ENCODE measurements at regions of chr10 and their contacts with region 1.

Region 1: DNA sequence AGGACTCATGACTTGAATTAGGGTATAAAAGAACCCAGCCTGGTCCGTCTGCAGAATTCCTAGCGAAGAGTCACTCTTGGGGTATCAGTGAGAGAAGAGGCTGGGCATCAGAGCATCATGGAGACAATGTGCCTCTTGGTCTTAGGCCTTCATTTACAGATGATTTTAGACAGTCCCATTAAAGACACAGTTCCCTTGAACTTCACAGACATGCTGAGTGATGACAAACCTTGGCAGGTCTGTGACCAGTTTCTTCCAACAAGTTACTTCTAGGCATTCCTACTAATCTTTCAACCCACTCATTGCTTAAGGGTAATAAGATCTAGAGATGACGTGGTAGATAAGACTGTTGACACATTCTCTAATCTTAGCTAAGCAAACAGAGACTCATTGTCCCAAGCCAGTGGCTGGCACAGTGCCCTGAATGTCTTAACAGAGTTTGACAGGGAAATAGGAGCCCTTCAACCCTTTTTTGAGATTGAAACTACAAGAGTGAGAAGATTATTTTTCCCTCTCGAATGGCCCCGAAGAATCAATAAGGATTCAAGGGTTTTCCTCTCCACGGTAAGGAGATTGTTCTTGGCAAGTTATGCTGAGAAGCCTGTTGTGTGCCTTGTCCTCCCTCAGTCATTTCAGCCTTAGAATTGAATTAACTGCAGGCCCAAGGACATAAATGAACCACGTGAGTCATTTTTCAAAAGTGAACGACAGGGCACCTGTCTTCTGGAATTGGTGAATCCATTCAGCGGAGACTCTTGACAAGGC is 281.1 kb downstream of the CCDC3 start:
- DNase-seq: peak; percentile 89
- H3K4me3 Mint-ChIP-seq: peak overlapping the region; percentile 39
- H3K27ac Mint-ChIP-seq: peak overlapping the region; percentile 72
- H3K4me1 Mint-ChIP-seq: peaks cover 25% of the 10 kb centered on the region
- H3K27me3 Mint-ChIP-seq: peaks cover 13% of the 10 kb centered on the region
- CTCF ChIP-seq: no peak

Region 2: DNA sequence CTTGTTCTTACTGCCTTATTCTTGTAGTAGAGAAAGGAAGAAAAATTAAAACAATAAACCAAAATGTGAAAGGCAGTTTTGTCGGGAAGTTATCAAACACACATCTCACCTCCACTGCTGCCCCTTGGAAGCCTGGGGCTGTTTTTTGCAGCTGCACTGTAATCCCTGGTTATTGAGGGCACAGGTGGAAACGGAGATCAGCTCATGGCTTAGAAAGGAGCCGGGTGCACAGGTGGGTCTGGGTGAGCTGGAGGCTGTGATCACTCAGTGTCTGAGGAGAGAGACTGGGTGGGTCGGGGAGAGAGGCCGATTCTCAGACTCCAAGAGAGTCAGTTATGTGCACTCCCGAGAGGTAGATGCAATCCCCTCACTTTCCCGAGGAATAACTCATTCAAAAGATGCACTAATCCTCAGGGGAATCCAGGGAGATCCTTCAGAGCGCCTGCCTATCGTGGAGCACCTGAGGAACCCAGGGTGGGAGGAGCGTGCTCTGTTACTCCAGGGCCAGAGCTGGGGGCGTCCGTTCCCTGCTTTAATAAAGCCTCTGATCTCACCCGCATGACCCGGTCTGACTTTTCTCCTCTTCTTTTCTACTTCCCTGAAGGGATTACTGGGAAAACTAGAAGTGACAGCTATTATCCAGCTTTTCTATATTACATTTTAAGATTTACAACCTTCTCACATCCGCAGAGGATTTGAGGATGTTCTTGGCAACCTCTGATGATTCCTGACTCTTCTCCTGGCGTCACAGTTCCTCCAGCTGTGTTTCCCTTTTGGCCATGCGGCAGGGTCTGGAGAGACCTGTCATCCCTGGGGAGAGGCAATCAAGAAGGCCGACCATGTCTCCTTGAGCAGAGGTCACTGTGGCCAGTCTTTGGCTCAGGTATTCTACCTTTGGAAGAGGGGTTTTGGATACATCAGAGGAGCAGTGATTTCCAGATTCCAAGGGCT is 289.0 kb before region 1 on chr10:
- CTCF ChIA-PET with region 1: no interaction called
- intact Hi-C with region 1: no loop called
- DNase-seq: no peak
- H3K4me3 Mint-ChIP-seq: no peak overlapping the region
- H3K27ac Mint-ChIP-seq: no peak overlapping the region
- H3K4me1 Mint-ChIP-seq: no peaks in the 10 kb centered on the region
- H3K27me3 Mint-ChIP-seq: peaks cover 86% of the 10 kb centered on the region
- CTCF ChIP-seq: no peak

Region 3: GRCh38 chr10:12750525-12751201 is 30.3 kb after region 1 on chr10:
- CTCF ChIA-PET with region 1: interaction called, 7 read pairs
- intact Hi-C with region 1: loop called (anchors 2 kb)
- DNase-seq: peak; percentile 46
- H3K4me3 Mint-ChIP-seq: peak overlapping the region; percentile 16
- H3K27ac Mint-ChIP-seq: peak overlapping the region; percentile 91
- H3K4me1 Mint-ChIP-seq: peaks cover 17% of the 10 kb centered on the region
- H3K27me3 Mint-ChIP-seq: peaks cover 90% of the 10 kb centered on the region
- CTCF ChIP-seq: no peak

Region 4: GRCh38 chr10:12844811-12845533 is 124.6 kb after region 1 on chr10:
- CTCF ChIA-PET with region 1: no interaction called
- intact Hi-C with region 1: loop called (anchors 5 kb)
- DNase-seq: peak; percentile 11
- H3K4me3 Mint-ChIP-seq: no peak overlapping the region
- H3K27ac Mint-ChIP-seq: no peak overlapping the region
- H3K4me1 Mint-ChIP-seq: peaks cover 9% of the 10 kb centered on the region
- H3K27me3 Mint-ChIP-seq: peaks cover 57% of the 10 kb centered on the region
- CTCF ChIP-seq: no peak

Region 5: GRCh38 chr10:12902135-12902572 is 181.8 kb after region 1 on chr10:
- CTCF ChIA-PET with region 1: no interaction called
- intact Hi-C with region 1: loop called (anchors 1 kb)
- DNase-seq: peak; percentile 66
- H3K4me3 Mint-ChIP-seq: no peak overlapping the region
- H3K27ac Mint-ChIP-seq: no peak overlapping the region
- H3K4me1 Mint-ChIP-seq: peaks cover 9% of the 10 kb centered on the region
- H3K27me3 Mint-ChIP-seq: peaks cover 89% of the 10 kb centered on the region
- CTCF ChIP-seq: peak; percentile 79

Region 6: DNA sequence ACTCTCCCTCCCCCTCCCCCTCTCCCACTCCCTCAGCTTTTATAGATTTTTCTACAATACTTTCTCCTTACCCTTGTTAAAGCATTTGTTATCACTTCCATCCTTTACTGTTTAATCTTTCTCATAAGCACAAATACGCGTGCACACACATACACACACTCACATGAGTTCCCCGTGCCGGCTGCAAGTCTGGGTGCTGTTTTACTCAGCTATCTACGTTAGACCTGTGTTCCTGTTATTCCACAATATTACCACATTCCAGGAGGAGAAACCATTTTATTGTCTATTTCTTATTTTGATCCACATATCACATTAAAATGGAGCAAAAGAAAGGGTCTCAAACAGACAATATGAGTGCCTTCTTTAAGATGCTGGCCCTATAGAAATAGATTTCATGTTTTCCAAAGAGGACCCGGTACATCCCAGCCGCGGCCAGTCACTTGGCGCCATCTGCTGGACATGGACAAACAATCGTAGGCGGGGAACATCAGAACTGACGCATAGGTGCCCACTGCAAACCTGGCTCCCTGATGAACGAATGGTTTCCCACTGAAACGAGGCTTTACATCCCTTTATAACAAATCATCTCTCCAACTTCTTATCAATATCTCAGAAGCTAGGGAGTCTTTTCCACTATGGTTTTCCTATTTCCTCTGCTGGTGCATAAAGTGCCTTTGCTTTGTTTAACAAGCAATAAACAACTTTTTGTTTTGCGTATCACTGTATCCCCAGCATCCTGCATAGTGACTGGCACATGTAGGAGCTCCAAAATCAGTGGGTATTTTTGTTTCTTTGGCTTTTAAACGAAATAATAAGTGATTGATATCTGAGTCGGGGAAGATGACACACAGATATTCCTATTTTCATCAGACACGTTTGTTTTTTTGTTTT is 354.4 kb after region 1 on chr10:
- CTCF ChIA-PET with region 1: no interaction called
- intact Hi-C with region 1: loop called (anchors 1 kb)
- DNase-seq: peak; percentile 75
- H3K4me3 Mint-ChIP-seq: no peak overlapping the region
- H3K27ac Mint-ChIP-seq: no peak overlapping the region
- H3K4me1 Mint-ChIP-seq: no peaks in the 10 kb centered on the region
- H3K27me3 Mint-ChIP-seq: peaks cover 68% of the 10 kb centered on the region
- CTCF ChIP-seq: peak; percentile 62